Left ventricle myocardium superior (tissue), 1 donor: ENCODE measurements at regions of chr3 and their contacts with region 1.

Region 1: GRCh38 chr3:14508961-14509795 is 31.0 kb downstream of the GRIP2 start:
- DNase-seq: peak; percentile 84
- ATAC-seq: peak; percentile 78

Region 2: DNA sequence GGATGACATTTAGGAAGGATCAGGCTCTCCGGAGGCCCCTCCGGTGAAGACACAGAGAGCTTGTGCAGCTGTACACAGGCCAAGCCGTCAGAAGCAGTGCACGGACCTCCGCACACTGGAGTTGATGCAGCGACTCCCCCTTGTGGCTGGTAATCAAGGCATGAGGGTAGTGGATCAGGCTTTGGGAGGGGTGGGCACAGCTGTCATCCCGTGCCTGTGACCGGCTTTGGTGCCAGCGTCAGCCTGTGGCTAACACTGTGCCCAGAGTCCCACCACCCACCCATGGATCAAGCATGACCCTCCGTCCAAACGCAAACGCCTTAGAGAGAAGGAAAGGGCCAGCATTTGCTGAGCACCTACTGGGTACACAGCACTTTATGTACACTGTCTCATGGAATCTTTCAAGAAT is 39.1 kb after region 1 on chr3:
- intact Hi-C with region 1: loop called (anchors 5 kb)
- DNase-seq: peak; percentile 79
- ATAC-seq: peak; percentile 91